ENCODE measurements at regions of chr3 and their contacts with region 1.

Region 1: GRCh38 chr3:125019271-125019670 is 36.5 kb downstream of the HEG1 start:
- DNase-seq: peak in 2 of 5 donors; percentile 4 to 15
- H3K4me3 ChIP-seq: no peak overlapping the region
- H3K4me3 Mint-ChIP-seq: peak overlapping the region in 6 of 7 donors; percentile 9 to 71 (median 62)
- H3K27ac ChIP-seq: no peak overlapping the region
- H3K27ac Mint-ChIP-seq: peak overlapping the region in 7 of 8 donors; percentile 66 to 94 (median 90)
- H3K4me1 ChIP-seq: peaks cover 24% of the 10 kb centered on the region
- H3K4me1 Mint-ChIP-seq: peaks cover 49 to 67% (median 49%) of the 10 kb centered on the region in 3 donors
- H3K27me3 ChIP-seq: no peaks in the 10 kb centered on the region
- H3K27me3 Mint-ChIP-seq: peaks cover 0 to 2% of the 10 kb centered on the region in 2 donors

Region 2: GRCh38 chr3:124998247-124998630 is 21.0 kb before region 1 on chr3:
- CTCF ChIA-PET with region 1: no interaction called
- POLR2A ChIA-PET with region 1: no interaction called
- DNase-seq: no peak
- H3K4me3 ChIP-seq: no peak overlapping the region
- H3K4me3 Mint-ChIP-seq: no peak overlapping the region
- H3K27ac ChIP-seq: no peak overlapping the region
- H3K27ac Mint-ChIP-seq: peak overlapping the region in 3 of 8 donors; percentile 34 to 83 (median 72)
- H3K4me1 ChIP-seq: peaks cover 22% of the 10 kb centered on the region
- H3K4me1 Mint-ChIP-seq: peaks cover 5 to 7% (median 6%) of the 10 kb centered on the region in 3 donors
- H3K27me3 ChIP-seq: no peaks in the 10 kb centered on the region
- H3K27me3 Mint-ChIP-seq: no peaks in the 10 kb centered on the region

Region 3: DNA sequence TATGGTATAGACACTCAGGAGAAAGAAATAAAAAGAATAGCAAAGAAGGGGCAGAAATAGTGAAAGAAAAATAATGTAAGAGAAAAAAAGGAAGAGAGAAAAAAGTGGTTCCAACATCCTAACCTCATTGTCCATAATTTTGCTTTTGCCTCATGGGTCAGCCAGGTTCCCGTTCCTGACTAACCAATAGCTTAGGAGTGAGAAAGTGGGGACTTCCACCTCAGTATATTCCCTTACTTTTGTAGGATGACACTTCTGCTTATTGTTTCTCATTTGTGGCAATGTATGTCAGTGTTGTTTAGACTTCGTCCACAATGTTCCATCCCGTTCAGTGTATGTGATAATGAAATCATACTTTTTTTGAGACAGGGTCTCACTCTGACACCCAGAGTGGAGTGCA is 202.6 kb after region 1 on chr3:
- CTCF ChIA-PET with region 1: no interaction called
- POLR2A ChIA-PET with region 1: interaction called, 11 read pairs
- DNase-seq: no peak
- H3K4me3 ChIP-seq: no peak overlapping the region
- H3K4me3 Mint-ChIP-seq: no peak overlapping the region
- H3K27ac ChIP-seq: no peak overlapping the region
- H3K27ac Mint-ChIP-seq: peak overlapping the region in 1 of 8 donors; percentile 26
- H3K4me1 ChIP-seq: no peaks in the 10 kb centered on the region
- H3K4me1 Mint-ChIP-seq: peaks cover 17 to 21% (median 19%) of the 10 kb centered on the region in 3 donors
- H3K27me3 ChIP-seq: no peaks in the 10 kb centered on the region
- H3K27me3 Mint-ChIP-seq: peaks cover 0 to 1% of the 10 kb centered on the region in 2 donors

Region 4: GRCh38 chr3:126782554-126782953 is 1763.3 kb after region 1 on chr3:
- CTCF ChIA-PET with region 1: no interaction called
- POLR2A ChIA-PET with region 1: no interaction called
- DNase-seq: no peak
- H3K4me3 ChIP-seq: no peak overlapping the region
- H3K4me3 Mint-ChIP-seq: no peak overlapping the region
- H3K27ac ChIP-seq: no peak overlapping the region
- H3K27ac Mint-ChIP-seq: peak overlapping the region in 1 of 8 donors; percentile 15
- H3K4me1 ChIP-seq: no peaks in the 10 kb centered on the region
- H3K4me1 Mint-ChIP-seq: peaks cover 4 to 9% (median 7%) of the 10 kb centered on the region in 3 donors
- H3K27me3 ChIP-seq: no peaks in the 10 kb centered on the region
- H3K27me3 Mint-ChIP-seq: no peaks in the 10 kb centered on the region

Measured in CD8-positive, alpha-beta memory T cell (primary cell).